Psoas muscle (tissue), 8 donors: ENCODE measurements at regions of chrX and their contacts with region 1.

Region 1: GRCh38 chrX:76987381-76987780 is 459.8 kb upstream of the FGF16 start:
- DNase-seq: no peak
- ATAC-seq: no peak
- H3K4me3 ChIP-seq: no peak overlapping the region
- H3K27ac ChIP-seq: no peak overlapping the region
- H3K4me1 ChIP-seq: no peaks in the 10 kb centered on the region
- H3K27me3 ChIP-seq: no peaks in the 10 kb centered on the region
- CTCF ChIP-seq: no peak

Region 2: DNA sequence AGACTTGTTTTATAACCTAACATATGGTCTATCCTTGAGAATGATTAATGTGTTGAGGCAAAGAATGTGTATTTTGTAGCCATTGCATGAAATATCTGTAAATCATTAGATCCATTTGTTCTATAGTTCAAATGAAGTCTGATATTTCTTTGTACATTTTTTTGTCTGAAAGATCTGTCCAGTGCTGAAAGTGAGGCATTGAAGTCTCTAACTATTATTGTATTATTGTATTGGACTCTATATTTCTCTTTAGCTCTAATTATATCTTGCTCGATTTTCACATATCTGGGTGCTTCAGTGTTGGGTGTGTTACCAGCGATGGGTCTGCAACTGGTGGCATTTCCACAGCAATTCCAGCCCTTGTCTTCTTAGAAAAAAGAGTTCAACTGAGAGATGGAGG is 738.5 kb before region 1 on chrX:
- intact Hi-C with region 1: loop called in 1 of 2 experiments (anchors 5 kb)
- DNase-seq: no peak
- ATAC-seq: no peak
- H3K4me3 ChIP-seq: no peak overlapping the region
- H3K27ac ChIP-seq: no peak overlapping the region
- H3K4me1 ChIP-seq: no peaks in the 10 kb centered on the region
- H3K27me3 ChIP-seq: peaks cover 0 to 33% (median 0%) of the 10 kb centered on the region in 3 donors
- CTCF ChIP-seq: no peak